Cardiac septum (tissue), 1 donor: ENCODE measurements at regions of chr5 and their contacts with region 1.

Region 1: GRCh38 chr5:141524604-141525597 is 36.0 kb downstream of the PCDHGC5 start:
- DNase-seq: peak; percentile 90

Region 2: DNA sequence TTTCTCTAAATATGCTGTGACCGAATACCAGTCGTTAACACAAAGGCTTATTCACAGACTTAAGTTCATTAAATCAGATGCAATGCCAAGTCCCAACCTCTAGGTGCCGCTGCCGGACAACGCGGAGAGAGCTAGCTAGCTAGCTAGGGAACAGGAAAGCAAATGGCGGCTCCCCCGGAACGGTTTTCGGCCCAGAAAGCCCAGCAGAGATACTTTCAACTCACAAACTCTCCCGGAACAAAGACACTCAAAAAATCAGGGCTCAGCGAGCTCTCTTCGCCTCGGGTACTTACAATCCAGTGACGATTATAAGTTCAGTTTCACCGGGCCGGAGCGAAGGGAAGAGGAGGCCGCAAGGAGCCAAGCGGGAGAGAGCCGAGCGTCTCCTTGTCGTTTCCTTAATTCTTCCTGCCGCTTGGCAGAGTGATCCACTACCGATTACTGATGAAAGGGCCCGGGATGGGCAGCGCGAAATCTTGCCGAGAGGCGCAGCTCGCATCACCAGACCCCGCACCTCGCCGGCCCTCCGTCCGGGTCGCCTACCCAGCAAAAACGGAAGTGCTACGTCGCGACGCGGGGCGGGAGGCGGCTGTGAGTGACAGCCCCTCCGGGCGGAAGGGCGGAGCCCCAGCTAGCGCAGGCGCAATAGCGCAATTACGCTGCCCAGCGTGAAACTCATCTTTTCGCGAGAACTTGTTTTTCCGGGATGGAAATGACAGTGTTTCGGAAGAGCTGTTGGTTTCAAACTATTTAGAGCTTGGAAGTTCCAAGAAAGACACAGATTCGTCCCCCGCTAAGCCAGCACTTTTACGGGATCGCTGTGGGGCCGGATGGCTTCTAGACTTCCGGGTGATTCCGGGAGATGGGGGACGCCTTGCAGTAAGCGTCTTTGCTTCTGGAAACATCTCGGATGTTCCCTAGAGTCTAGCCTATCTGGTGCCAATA is 204.4 kb before region 1 on chr5 and contains the start of gene TAF7:
- intact Hi-C with region 1: loop called (anchors 10 kb)
- DNase-seq: peak; percentile 95
- total RNA-seq, gene TAF7: 116 TPM

Region 3: DNA sequence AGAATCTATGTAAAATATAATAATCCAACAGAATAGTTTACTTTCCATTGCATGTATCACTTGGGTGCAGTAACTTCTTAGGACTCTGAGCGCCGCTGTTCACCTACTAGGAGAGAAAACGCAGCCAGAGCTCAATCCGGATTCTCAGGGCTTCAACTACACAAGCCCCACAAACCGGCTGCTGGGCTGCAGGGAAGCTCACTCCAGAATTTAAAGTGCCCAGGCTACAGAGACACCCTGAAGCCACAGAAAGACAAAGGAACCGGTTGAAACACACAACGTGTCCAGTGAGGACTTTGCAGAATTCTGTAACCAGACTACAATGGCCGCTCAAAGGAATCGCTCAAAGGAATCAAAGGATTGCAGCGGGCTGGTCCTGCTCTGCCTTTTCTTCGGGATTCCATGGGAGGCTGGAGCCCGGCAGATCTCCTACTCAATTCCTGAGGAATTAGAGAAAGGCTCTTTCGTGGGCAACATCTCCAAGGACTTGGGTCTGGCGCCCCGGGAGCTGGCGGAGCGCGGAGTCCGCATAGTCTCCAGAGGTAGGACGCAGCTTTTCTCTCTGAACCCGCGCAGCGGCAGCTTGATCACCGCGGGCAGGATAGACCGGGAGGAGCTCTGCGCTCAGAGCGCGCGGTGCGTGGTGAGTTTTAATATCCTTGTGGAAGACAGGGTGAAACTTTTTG is 111.9 kb before region 1 on chr5 and contains the start of gene PCDHGA10:
- intact Hi-C with region 1: loop called (anchors 2 kb)
- DNase-seq: no peak
- total RNA-seq, gene PCDHGA10: 11.0 TPM

Region 4: GRCh38 chr5:141430332-141431113 is 94.4 kb before region 1 on chr5 and contains the start of gene PCDHGA12:
- intact Hi-C with region 1: loop called (anchors 5 kb)
- DNase-seq: no peak
- total RNA-seq, gene PCDHGA12: 10.3 TPM

Region 5: DNA sequence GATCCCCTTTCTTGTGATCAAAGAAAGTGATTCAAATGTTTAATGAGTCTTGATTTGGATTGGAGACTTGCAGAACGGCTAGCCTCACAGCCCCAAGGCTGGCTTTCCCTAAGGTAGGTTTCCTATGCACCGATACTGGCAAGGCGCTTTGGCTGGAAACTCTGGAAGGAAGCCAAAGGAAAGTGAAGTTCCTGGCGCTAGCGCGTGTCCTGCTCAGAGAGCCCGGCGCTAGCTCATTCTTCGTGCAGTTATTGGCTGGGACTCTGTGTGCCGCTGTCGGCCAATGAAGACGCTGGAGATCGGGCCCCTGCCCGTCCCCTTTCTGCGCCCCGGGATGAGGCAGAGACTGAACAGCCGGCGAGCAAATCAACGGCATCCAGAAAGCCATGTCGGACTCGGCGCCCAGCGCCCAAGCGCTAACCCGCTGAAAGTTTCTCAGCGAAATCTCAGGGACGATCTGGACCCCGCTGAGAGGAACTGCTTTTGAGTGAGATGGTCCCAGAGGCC is 49.2 kb before region 1 on chr5 and contains the start of gene PCDHGC3:
- intact Hi-C with region 1: loop called (anchors 1 kb)
- DNase-seq: peak; percentile 94
- total RNA-seq, gene PCDHGC3: 16.9 TPM

Region 6: DNA sequence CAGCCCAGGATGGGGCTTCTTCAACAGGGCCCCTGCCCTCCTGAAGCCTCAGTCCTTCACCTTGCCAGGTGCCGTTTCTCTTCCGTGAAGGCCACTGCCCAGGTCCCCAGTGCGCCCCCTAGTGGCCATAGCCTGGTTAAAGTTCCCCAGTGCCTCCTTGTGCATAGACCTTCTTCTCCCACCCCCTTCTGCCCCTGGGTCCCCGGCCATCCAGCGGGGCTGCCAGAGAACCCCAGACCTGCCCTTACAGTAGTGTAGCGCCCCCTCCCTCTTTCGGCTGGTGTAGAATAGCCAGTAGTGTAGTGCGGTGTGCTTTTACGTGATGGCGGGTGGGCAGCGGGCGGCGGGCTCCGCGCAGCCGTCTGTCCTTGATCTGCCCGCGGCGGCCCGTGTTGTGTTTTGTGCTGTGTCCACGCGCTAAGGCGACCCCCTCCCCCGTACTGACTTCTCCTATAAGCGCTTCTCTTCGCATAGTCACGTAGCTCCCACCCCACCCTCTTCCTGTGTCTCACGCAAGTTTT is 12.5 kb before region 1 on chr5:
- intact Hi-C with region 1: loop called (anchors 1 kb)
- DNase-seq: peak; percentile 93

Region 7: DNA sequence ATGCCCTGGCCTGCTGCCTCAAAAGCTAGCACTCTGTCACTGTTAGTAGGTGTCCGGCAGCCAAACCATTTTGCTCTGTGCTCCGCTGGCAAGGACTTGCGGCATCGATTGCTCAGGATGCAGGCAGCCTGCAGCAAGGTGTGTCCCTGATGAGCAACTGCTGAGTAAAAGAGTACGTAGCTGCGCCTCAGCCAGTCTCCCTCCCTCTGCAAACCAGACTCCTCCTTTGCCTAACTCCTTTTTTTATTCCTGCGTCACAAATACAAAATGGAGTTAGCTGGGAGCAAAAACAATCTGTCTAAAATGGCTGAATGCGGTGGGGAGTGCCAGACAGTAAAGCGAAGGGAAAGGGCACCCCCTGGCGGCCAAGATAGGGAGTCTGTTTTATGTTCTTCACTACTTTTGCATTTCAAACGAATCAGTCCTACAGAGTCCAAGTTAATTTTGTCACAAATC is 32.8 kb after region 1 on chr5:
- intact Hi-C with region 1: loop called (anchors 1 kb)
- DNase-seq: peak; percentile 89

Region 8: DNA sequence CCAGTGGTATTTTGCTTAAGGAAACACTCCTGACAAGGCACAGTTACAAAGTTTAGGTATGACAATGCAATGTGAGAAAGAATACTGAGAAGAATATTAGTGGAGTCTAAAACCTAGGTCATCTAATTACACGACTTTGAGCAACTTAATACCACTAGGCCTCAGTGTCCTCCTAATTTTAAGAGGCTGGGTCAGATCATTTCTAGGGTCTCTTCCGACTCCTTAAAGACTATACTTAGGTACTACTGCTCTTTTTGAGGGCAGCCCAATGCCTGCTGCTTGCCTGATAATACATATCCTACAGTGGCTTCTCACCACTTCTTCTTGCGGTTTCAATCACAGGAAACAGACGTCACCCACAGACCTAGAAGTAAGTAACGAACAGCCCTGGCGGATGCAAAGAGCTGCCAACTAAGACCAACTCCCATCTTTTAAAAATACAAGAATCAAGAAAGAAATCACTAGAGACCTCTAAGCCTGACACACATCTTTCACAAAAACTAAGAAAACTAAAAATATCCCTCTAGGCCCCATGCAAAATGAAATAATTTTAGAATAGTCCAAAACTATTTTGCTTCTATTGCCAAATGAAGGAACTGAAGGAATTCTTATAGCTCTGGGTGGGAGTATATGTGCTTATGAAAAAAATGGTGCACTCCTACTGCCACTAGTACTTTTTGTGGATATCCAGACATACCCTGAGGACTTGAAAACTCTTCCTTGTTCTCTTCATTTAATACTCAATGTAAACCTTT is 80.8 kb after region 1 on chr5:
- intact Hi-C with region 1: no loop called
- DNase-seq: peak; percentile 81